GM12878 (cell line): ENCODE measurements at regions of chr5 and their contacts with region 1.

Region 1: DNA sequence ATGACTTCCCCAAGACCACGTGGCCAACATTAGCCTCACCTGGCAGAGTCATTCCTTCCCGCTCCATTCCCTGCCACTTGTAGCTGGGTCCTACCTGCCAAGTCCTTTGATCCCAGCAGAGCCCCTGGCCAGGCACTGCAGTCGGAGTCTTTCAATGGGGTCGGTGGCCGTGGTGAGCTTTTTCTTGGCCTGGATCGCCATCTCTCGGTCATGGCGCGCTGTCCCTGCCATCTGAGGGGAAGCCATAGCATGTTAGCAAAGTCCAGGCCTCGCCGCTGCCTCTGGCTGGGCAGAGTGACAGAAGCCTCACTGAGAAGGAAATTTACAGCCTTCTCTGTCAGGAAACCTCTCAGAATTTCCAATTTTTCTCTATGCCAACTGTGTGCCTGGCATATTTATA is 17.5 kb downstream of the CAPSL start:
- DNase-seq: no peak
- ATAC-seq: peak; percentile 65
- H3K4me3 ChIP-seq: no peak overlapping the region
- H3K27ac ChIP-seq: no peak overlapping the region
- H3K4me1 ChIP-seq: peaks cover 4% of the 10 kb centered on the region; the same call in 1 of the 2 replicates
- H3K27me3 ChIP-seq: no peaks in the 10 kb centered on the region
- CTCF ChIP-seq: peak in 2 of 3 experiments; percentile 7 to 36; a peak in 1 of 6 replicates
- EP300 ChIP-seq: no peak
- POLR2A ChIP-seq: no peak
- RAD21 ChIP-seq: peak; percentile 46; the same call in 1 of the 2 replicates

Region 2: DNA sequence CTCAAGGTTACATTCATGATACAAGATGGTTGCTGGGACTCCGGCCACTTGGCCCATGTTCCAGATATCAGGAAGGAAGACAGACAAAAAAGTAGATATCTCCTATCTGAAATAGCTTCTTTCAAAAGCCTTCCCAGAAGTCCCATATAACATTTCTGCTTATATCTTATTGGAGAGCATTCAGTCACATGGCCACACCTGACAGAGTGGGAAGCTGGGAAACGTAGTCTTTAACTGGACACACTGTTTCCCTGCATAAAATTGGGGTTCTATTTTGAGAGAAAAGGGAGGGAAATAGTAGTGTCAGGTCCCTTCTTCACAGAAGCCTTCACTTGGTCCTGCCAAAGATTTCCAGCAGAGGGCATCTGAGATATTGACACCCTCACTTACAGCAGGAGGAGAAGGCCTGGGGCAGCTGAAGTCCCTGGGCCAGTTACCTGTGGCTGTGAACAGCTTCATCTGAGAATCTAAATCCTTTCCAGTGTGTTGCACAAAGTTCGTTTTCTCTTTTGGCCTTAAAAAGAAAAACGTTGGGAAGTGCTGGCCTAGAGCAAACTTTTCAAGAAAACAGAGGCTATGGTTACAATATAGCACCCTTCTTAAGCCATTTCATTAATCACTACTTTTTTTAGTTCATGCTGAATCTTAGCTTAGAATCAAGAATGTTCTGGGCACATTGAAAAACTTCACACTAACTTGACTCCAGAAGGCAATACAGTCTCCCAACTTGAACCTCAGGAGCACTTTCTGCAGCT is 269.7 kb before region 1 on chr5:
- CTCF ChIA-PET with region 1: interaction called, 192 read pairs
- POLR2A ChIA-PET with region 1: no interaction called
- RAD21 ChIA-PET with region 1: interaction called, 98 read pairs
- SMC1A ChIA-PET with region 1: interaction called, 61 read pairs
- in situ Hi-C with region 1: loop called (anchors 5 kb)
- intact Hi-C with region 1: loop called (anchors 1 kb)
- DNase-seq: no peak
- ATAC-seq: peak; percentile 98
- H3K4me3 ChIP-seq: no peak overlapping the region
- H3K27ac ChIP-seq: no peak overlapping the region
- H3K4me1 ChIP-seq: no peaks in the 10 kb centered on the region
- H3K27me3 ChIP-seq: no peaks in the 10 kb centered on the region
- CTCF ChIP-seq: peak; percentile 45 to 57 (median 57); a peak in 4 of 6 replicates
- EP300 ChIP-seq: no peak
- POLR2A ChIP-seq: no peak
- RAD21 ChIP-seq: peak; percentile 56

Region 3: GRCh38 chr5:35908228-35908627 is 12.7 kb before region 1 on chr5:
- CTCF ChIA-PET with region 1: interaction called, 13 read pairs
- POLR2A ChIA-PET with region 1: no interaction called
- RAD21 ChIA-PET with region 1: interaction called, 6 read pairs
- SMC1A ChIA-PET with region 1: interaction called, 36 read pairs
- in situ Hi-C with region 1: no loop called
- intact Hi-C with region 1: no loop called
- DNase-seq: no peak
- ATAC-seq: no peak
- H3K4me3 ChIP-seq: no peak overlapping the region
- H3K27ac ChIP-seq: no peak overlapping the region
- H3K4me1 ChIP-seq: peaks cover 14% of the 10 kb centered on the region
- H3K27me3 ChIP-seq: no peaks in the 10 kb centered on the region
- CTCF ChIP-seq: no peak
- EP300 ChIP-seq: no peak
- POLR2A ChIP-seq: no peak
- RAD21 ChIP-seq: no peak